Prostate gland (tissue), 2 donors: ENCODE measurements at regions of chr12 and their contacts with region 1.

Region 1: DNA sequence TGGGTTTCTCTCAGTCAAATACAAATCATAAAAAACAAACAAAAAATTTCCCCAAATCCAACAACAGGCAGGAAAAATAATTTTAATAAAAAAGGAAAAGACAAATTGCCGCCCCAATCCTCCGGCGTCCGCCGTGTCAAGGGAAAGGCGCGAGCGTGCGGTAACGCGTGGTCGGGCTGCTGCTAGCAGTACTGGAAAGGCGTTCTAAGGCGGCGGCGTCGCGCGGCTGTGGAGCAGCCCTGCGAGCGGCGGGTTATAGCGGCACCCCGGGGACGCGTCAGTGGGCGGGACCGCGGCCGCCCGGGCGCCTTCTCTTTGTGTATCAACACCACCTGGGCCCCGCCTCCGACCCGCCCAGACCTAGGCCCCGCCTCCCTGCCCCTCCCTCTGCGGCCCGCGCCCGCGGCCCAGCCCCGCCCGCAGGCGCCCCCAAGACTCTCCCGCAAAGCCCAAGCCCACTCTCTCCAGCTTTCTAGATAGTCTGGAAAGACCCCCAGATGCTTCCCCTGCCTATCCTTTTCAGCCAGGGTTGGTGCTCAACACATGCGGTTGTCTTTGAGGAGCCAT is at the start of gene SLC38A2:
- DNase-seq: peak; percentile 98
- H3K4me3 ChIP-seq: peak within 1 kb of the TSS; percentile 97 to 98
- H3K27ac ChIP-seq: peak within 1 kb of the TSS; percentile 98 to 99
- H3K4me1 ChIP-seq: peaks cover 4% of the 10 kb centered on the region
- H3K27me3 ChIP-seq: no peaks in the 10 kb centered on the region
- CTCF ChIP-seq: peak in 2 of 4 experiments; percentile 12 to 14
- POLR2A ChIP-seq: peak; percentile 97
- total RNA-seq, gene SLC38A2: 116 to 264 TPM

Region 2: DNA sequence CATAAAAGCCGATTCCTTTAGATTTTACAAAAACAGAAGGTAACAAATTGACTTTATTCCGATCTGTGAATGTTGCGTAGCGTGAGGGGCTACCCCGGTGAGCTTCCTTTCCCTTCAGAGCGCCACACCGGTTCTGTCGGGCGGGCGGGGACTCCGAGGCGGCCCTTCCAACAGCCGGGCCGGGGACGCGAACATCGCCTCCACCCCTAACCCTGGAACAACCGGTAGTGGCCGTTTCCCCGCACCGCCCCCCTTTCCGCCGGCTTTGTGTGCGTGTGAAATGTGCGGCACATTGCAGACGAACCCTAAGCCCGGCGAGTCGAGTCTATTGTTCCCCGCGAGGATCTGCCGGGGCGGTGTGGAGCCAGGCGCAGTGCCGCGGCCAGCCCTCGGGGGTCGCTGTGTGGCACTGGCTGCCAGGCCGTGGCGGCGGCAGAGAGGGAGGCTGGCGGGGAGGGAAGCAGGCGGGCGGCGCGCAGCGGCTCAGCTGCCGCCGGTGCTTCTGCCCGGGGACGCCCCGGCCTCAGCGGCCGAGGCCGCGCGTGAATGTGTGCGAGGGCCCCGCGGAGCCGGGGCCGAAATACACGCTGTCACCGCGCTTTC is 643.9 kb before region 1 on chr12:
- intact Hi-C with region 1: loop called (anchors 5 kb)
- DNase-seq: peak; percentile 94
- H3K4me3 ChIP-seq: peak overlapping the region; percentile 80 to 87
- H3K27ac ChIP-seq: peak overlapping the region; percentile 99 to 100
- H3K4me1 ChIP-seq: no peaks in the 10 kb centered on the region
- H3K27me3 ChIP-seq: no peaks in the 10 kb centered on the region
- CTCF ChIP-seq: peak; percentile 85 to 98 (median 96)
- POLR2A ChIP-seq: peak; percentile 83

Region 3: DNA sequence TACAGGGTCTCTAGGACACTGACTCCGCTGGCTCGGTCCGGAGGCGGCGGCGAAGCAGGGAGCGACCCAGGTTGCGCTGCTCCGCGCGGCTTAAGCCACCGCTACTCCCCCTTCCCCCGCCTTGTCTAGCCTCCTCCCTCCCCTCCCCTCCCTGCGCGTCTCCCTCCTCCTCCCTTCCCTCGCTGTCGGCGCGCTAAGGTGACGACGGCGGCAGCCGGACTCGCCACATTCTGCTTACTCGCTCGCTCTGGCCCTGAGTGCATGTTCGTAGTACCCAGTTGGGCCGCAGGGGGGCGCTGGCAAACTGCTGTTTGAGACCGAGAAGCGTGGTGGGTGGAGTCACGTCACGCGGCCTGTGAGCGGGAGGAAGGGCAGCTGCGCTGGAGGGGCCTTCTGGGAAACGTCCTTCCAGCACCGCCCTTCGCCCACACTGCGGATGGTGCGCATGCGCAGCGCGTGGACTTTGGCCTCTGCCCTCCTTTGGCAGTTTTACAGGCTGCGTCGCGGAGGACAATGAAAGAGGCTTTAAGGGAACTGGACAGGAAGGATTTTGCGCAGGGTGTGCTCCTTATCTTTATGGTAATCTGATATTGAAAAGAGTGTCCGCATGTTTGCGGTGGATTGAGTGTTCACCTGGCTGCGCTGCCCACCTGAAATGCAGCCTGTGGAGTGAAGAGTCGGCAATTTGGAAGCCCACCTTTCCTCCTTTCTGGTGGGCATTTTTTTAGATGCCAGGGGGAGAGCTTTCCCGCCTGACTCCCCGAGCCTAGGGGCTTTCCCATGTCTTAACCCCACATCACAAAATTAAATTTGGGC is 382.0 kb before region 1 on chr12 and contains the start of gene SCAF11:
- intact Hi-C with region 1: loop called (anchors 5 kb)
- DNase-seq: peak; percentile 100
- H3K4me3 ChIP-seq: peak within 1 kb of the TSS; percentile 73 to 79
- H3K27ac ChIP-seq: peak within 1 kb of the TSS; percentile 98 to 99
- H3K4me1 ChIP-seq: peaks cover 7% of the 10 kb centered on the region
- H3K27me3 ChIP-seq: no peaks in the 10 kb centered on the region
- CTCF ChIP-seq: peak; percentile 98 to 100 (median 100)
- POLR2A ChIP-seq: peak; percentile 55
- total RNA-seq, gene SCAF11: 144 to 171 TPM

Region 4: GRCh38 chr12:46209914-46210872 is 162.4 kb before region 1 on chr12:
- intact Hi-C with region 1: loop called (anchors 2 kb)
- DNase-seq: peak; percentile 27
- H3K4me3 ChIP-seq: no peak overlapping the region
- H3K27ac ChIP-seq: peak overlapping the region; percentile 8 to 60
- H3K4me1 ChIP-seq: no peaks in the 10 kb centered on the region
- H3K27me3 ChIP-seq: no peaks in the 10 kb centered on the region
- CTCF ChIP-seq: no peak
- POLR2A ChIP-seq: no peak

Region 5: DNA sequence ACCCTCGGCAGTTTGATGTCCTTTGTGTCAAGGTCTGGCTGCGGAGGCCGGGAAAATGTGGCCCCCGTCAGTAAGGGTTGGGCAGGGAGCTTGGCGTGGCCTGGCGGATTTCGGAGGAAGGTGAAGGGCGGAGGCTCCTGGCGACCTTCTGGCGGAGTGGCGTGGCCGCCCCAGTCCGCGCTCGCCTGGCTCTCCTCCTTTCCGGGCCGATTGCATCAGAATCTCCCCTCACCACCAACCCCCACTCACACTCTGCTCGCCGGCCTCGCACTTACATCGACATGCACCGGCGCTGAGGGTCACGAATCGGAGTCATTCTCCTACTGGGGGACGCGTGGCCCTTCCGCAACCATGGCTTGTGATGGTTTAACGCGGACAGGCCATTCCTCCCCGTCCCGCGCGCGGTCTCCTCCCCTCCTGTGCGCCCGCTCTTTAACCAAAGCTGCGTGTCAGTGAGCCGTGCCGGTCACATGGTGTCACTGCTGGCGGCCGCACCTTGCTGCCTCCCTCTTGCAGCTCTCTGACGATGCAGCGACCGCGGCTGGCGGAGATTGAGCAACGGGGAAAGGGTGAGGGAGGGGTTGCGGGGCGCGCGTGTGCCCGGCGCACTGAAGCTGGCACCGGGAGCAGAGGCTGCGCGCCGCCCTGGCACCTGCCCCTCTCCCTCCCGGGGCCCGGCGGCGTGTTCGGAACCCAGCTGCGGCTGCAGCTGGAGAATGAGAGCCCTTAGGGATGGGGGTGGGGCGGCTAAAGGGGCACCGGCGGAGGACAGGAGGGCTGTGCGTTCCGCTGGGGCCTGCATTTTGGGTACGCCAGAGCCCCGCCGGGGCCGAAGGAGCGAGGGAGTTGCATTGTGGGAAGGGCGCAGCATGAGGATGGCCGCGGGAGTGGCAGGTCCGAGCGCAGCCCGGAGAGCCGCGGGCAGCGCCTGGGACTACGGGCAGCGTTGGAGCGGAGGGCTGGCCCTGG is 103.8 kb before region 1 on chr12 and contains the start of gene SLC38A1:
- intact Hi-C with region 1: loop called (anchors 2 kb)
- DNase-seq: peak; percentile 88
- H3K4me3 ChIP-seq: peak within 1 kb of the TSS; percentile 50 to 59
- H3K27ac ChIP-seq: peak within 1 kb of the TSS; percentile 81 to 83
- H3K4me1 ChIP-seq: no peaks in the 10 kb centered on the region
- H3K27me3 ChIP-seq: no peaks in the 10 kb centered on the region
- CTCF ChIP-seq: no peak
- POLR2A ChIP-seq: peak; percentile 82
- total RNA-seq, gene SLC38A1: 24.1 to 45.1 TPM

Region 6: GRCh38 chr12:46382964-46383653 is 10.5 kb after region 1 on chr12:
- intact Hi-C with region 1: loop called (anchors 1 kb)
- DNase-seq: peak; percentile 97
- H3K4me3 ChIP-seq: peak overlapping the region; percentile 74 to 84
- H3K27ac ChIP-seq: peak overlapping the region; percentile 99
- H3K4me1 ChIP-seq: peaks cover 5% of the 10 kb centered on the region
- H3K27me3 ChIP-seq: no peaks in the 10 kb centered on the region
- CTCF ChIP-seq: peak in 3 of 4 experiments; percentile 29 to 55 (median 49)
- POLR2A ChIP-seq: peak; percentile 96

Region 7: DNA sequence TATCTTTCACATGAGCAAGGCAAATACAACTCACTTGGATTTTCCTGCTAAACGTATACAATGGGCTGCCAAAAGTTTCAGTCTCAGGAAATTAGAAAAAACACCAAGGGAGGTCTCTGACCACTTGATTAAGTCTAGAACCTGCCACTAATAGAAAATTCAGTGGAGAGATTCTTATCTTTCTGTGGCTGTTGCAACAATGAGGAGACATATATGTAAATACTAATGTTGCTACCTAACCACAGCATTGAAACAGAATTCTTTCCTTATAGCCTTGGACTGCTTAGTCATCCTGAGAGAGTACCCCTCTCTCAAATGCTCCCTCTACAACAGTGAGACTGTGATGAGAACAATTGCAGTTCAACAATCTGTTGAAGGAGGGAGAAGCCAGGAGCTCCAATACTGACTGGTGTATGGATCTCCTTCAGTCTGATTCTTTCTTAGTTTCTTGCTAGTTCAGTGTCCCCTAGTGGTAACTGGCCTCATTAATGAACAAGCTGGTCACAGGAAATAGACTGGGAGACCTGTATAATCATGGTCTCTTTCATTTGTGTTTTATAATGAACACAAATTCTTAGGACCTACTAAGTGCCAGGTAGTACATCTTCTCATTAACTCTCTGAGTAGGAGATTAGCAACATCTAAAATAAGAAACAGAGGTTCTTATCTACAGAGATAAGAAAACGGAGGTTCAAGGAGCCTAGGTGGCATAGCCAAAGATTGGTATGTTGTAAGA is 288.7 kb after region 1 on chr12:
- intact Hi-C with region 1: loop called (anchors 2 kb)
- DNase-seq: peak; percentile 33
- H3K4me3 ChIP-seq: no peak overlapping the region
- H3K27ac ChIP-seq: peak overlapping the region in 1 of 2 donors; percentile 1
- H3K4me1 ChIP-seq: no peaks in the 10 kb centered on the region
- H3K27me3 ChIP-seq: no peaks in the 10 kb centered on the region
- CTCF ChIP-seq: peak in 3 of 4 experiments; percentile 72 to 84 (median 78)
- POLR2A ChIP-seq: no peak